Endothelial cell of umbilical vein (primary cell): ENCODE measurements at regions of chr1 and their contacts with region 1.

Region 1: DNA sequence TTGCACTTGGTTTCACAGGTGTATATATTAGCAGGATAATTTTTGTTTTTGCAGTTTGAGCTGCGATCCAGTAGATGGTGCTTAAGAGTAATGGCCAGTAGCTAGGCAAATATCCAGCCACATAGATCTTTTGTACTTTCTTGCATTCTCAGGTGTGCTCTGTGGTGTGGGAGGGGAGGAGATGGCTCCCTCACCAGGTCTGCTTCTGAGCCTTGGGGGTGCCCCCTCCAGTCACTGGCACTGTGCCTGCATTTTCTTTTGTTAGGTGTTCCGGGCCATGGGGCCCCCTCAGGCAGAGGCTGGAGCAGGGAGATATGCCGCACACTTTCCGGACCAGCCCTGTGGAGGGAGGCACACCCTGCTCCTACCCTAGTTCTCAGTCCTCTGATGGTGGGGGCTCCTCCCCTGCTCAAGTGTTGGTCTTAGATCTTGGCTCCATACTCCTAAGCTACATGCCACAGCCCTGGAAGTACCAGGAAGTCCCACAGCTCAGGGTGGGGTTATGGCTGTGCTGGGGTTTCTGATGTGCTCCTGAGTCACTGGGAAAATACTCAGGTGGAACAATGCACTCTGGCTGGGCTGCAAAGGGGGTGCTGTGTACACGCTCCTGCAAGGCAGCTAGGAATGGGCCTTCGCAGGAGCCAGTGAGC is 197.6 kb upstream of the DMRTA2 start:
- DNase-seq: peak; percentile 42
- H3K4me3 ChIP-seq: no peak overlapping the region
- H3K27ac ChIP-seq: no peak overlapping the region
- H3K4me1 ChIP-seq: no peaks in the 10 kb centered on the region
- H3K27me3 ChIP-seq: no peaks in the 10 kb centered on the region
- CTCF ChIP-seq: peak; percentile 26 to 54
- POLR2A ChIP-seq: no peak

Region 2: DNA sequence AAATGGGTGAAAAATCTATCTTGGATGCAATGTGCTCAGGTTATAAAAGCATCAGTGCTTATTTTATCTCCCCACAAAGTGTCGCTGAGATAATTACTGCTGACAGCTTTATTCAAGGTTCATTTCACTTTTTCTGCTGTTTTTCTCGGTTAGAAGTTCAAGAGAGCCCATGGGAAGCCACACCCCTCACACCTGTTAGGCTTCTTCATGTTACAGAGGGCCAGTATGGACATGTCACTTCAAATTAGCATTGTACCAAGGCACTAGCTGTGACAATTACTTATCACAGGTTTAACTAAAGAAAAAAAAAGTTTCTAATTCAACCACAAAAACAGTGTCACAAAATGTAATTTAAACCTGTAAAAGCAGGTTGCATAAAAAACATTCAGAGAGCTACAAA is 10.2 kb before region 1 on chr1:
- CTCF ChIA-PET with region 1: interaction called, 13 read pairs
- POLR2A ChIA-PET with region 1: interaction called, 5 read pairs
- dilution Hi-C with region 1: no loop called
- intact Hi-C with region 1: no loop called
- DNase-seq: no peak
- H3K4me3 ChIP-seq: no peak overlapping the region
- H3K27ac ChIP-seq: no peak overlapping the region
- H3K4me1 ChIP-seq: no peaks in the 10 kb centered on the region
- H3K27me3 ChIP-seq: no peaks in the 10 kb centered on the region
- CTCF ChIP-seq: no peak
- POLR2A ChIP-seq: no peak

Region 3: GRCh38 chr1:50735443-50735842 is 114.6 kb after region 1 on chr1:
- CTCF ChIA-PET with region 1: interaction called, 14 read pairs
- POLR2A ChIA-PET with region 1: no interaction called
- dilution Hi-C with region 1: no loop called
- intact Hi-C with region 1: no loop called
- DNase-seq: peak; percentile 38
- H3K4me3 ChIP-seq: no peak overlapping the region
- H3K27ac ChIP-seq: no peak overlapping the region
- H3K4me1 ChIP-seq: no peaks in the 10 kb centered on the region
- H3K27me3 ChIP-seq: no peaks in the 10 kb centered on the region
- CTCF ChIP-seq: peak; percentile 20 to 23
- POLR2A ChIP-seq: no peak